ENCODE measurements at regions of chr10 and their contacts with region 1.

Region 1: GRCh38 chr10:91908337-91909116 is 759 bp downstream of the FGFBP3 start:
- DNase-seq: peak; percentile 72 to 85 (median 81)
- H3K4me3 ChIP-seq: peak overlapping the region; percentile 10 to 69 (median 44)
- H3K27ac ChIP-seq: peak overlapping the region in 4 of 5 donors; percentile 1 to 79 (median 24)
- H3K4me1 ChIP-seq: peaks cover 0 to 11% of the 10 kb centered on the region in 2 donors
- H3K27me3 ChIP-seq: no peaks in the 10 kb centered on the region
- CTCF ChIP-seq: peak in 4 of 6 experiments; percentile 26 to 32 (median 28)
- POLR2A ChIP-seq: peak in 1 of 2 donors; percentile 59

Region 2: DNA sequence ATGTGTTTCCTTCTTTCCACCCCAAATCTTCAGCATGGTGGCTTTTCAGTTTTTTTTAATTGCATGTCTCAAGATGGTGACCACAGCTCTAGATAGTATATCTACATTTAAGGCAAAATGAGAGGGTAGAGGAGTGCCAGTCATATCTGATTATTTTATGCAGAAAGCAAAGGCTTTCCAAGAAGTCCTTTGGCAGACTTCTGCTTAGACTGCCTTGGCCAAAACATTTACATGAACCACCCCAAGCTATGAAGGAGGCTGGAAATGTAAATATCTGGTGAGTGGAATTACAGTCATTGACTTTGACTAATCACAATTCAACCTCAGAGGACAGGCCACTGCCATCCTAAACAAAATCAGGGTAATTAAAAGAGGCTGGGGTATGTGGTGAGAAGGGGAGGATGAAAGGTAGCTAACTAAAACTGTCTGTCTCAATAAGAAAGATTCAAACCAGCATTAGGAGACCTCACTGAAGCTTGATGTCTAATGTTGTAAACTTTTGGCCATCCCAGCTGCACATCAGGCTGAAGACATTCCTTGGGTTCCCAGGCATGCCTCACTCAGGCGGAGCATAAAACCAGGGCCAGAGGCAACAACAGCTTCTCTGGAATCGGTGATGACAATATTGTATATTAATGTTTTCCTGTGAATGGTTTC is 329.1 kb before region 1 on chr10:
- intact Hi-C with region 1: no loop called
- DNase-seq: no peak
- H3K4me3 ChIP-seq: no peak overlapping the region
- H3K27ac ChIP-seq: no peak overlapping the region
- H3K4me1 ChIP-seq: no peaks in the 10 kb centered on the region
- H3K27me3 ChIP-seq: no peaks in the 10 kb centered on the region
- CTCF ChIP-seq: no peak
- POLR2A ChIP-seq: no peak

Region 3: GRCh38 chr10:91758303-91759146 is 150.0 kb before region 1 on chr10:
- intact Hi-C with region 1: loop called (anchors 5 to 10 kb)
- DNase-seq: no peak
- H3K4me3 ChIP-seq: no peak overlapping the region
- H3K27ac ChIP-seq: no peak overlapping the region
- H3K4me1 ChIP-seq: no peaks in the 10 kb centered on the region
- H3K27me3 ChIP-seq: no peaks in the 10 kb centered on the region
- CTCF ChIP-seq: peak; percentile 20 to 68 (median 58)
- POLR2A ChIP-seq: no peak

Region 4: DNA sequence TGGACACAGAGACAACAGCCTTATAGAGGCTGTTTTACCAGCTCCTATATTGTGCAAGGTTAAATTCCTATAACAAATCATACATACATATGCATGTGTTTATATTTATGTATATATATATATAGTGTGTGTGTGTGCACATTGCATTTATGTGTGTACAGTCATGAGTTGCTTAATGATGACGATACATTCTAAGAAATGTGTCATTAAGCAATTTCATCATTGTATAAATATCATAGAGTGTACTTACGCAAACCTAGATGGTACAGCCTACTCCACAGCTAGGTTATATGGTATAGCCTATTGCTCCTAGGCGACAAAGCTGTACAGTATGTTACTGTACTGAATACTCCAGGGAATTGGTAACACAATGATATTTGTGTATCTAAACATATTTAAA is 140.4 kb before region 1 on chr10:
- intact Hi-C with region 1: loop called in 1 of 2 experiments (anchors 10 kb)
- DNase-seq: no peak
- H3K4me3 ChIP-seq: no peak overlapping the region
- H3K27ac ChIP-seq: no peak overlapping the region
- H3K4me1 ChIP-seq: no peaks in the 10 kb centered on the region
- H3K27me3 ChIP-seq: no peaks in the 10 kb centered on the region
- CTCF ChIP-seq: no peak
- POLR2A ChIP-seq: no peak

Measured in adrenal gland (tissue), 19 donors.